ENCODE measurements at regions of chr1 and their contacts with region 1.

Region 1: DNA sequence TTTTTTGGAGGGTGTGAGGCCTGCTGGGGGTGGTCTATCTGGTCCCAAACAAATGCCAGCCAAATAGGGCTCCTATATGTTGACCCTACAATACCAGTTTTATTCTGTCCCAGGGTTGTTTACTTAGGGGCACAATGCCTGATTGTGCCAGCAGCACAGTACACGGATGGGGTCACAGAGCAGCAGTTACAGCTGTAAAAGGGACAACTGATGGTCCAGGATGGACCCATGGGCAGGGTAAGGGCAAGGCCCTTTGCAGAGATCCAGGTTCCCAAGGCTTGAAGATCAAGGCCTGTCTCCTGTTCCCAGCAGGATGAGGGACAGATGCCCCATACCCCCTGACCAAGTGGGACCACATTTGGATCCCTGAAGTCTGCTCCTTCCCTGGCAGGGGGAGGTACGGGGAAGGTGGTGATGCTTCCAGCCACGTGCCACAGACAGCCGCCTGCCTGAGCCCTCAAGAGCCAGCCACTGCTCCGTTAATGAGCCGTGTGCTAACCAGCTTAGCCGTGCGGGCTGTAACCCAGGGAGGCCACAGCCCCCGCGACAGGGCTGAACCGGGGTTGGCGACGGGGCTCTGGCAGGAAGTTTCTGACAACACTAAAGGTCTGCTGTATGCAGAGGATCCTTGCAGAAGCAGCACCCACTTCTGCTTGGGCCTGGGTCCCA is 18.2 kb downstream of the SLC6A9 start:
- DNase-seq: no peak
- ATAC-seq: no peak
- H3K4me3 ChIP-seq: no peak overlapping the region
- H3K27ac ChIP-seq: no peak overlapping the region
- H3K4me1 ChIP-seq: peaks cover 6 to 48% of the 10 kb centered on the region in 2 experiments; a peak in 4 of 5 replicates
- H3K27me3 ChIP-seq: no peaks in the 10 kb centered on the region
- CTCF ChIP-seq: no peak
- EP300 ChIP-seq: no peak
- POLR2A ChIP-seq: no peak
- RAD21 ChIP-seq: no peak

Region 2: GRCh38 chr1:43974443-43975248 is 38.4 kb before region 1 on chr1 and contains the start of gene ATP6V0B:
- CTCF ChIA-PET with region 1: no interaction called
- POLR2A ChIA-PET with region 1: no interaction called
- in situ Hi-C with region 1: no loop called
- intact Hi-C with region 1: no loop called
- DNase-seq: peak; percentile 91 to 99 (median 95)
- ATAC-seq: peak; percentile 87
- H3K4me3 ChIP-seq: peak within 1 kb of the TSS; percentile 87
- H3K27ac ChIP-seq: peak within 1 kb of the TSS; percentile 89
- H3K4me1 ChIP-seq: peaks cover 41 to 67% of the 10 kb centered on the region in 2 experiments
- H3K27me3 ChIP-seq: no peaks in the 10 kb centered on the region
- CTCF ChIP-seq: peak in 1 of 3 experiments; percentile 33; a peak in 2 of 6 replicates
- EP300 ChIP-seq: no peak; the same call in 1 of the 2 replicates
- POLR2A ChIP-seq: peak; percentile 81
- RAD21 ChIP-seq: 0 out of 4 replicates have a peak, but pooled peaks of 1 of the 2 experiments have one; percentile 13
- polyA plus RNA-seq, gene ATP6V0B: 137 to 276 TPM

Region 3: DNA sequence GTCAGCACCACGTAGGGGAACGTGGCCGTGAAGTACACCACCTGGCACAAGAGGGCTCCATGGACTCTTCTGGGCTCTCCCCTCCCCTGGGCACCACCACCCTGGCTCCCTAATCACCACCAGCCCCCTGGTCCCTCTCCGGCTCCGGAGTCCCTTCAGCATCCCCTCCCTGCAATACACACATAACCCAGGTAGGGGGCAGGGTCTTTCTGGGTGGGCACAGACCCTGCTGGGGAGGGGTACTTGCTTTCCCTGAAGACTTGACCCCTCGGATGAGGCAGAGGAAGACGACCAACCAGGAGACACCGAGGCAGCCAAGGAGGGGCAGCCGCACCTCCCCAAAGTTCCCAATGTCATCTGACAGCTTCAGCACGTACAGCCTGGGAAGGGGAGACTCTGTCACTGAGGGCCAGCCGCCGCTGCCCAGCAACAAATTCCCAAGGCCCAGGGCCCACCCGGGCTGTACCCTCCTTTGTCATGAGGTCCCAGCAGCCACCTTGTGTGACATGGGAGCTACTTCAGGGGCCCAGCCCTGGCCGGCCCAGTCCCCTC is 10.4 kb before region 1 on chr1:
- CTCF ChIA-PET with region 1: no interaction called
- POLR2A ChIA-PET with region 1: interaction called, 11 read pairs
- in situ Hi-C with region 1: no loop called
- intact Hi-C with region 1: no loop called
- DNase-seq: no peak
- ATAC-seq: no peak
- H3K4me3 ChIP-seq: no peak overlapping the region
- H3K27ac ChIP-seq: no peak overlapping the region
- H3K4me1 ChIP-seq: peaks cover 0 to 49% of the 10 kb centered on the region in 2 experiments; a peak in 3 of 5 replicates
- H3K27me3 ChIP-seq: no peaks in the 10 kb centered on the region
- CTCF ChIP-seq: peak; percentile 20 to 50 (median 48); a peak in 4 of 6 replicates
- EP300 ChIP-seq: no peak
- POLR2A ChIP-seq: no peak
- RAD21 ChIP-seq: no peak

Region 4: GRCh38 chr1:44029906-44030604 is 17.0 kb after region 1 on chr1:
- CTCF ChIA-PET with region 1: no interaction called
- POLR2A ChIA-PET with region 1: interaction called, 29 read pairs
- in situ Hi-C with region 1: no loop called
- intact Hi-C with region 1: no loop called
- DNase-seq: peak; percentile 95 to 96 (median 96)
- ATAC-seq: peak; percentile 85
- H3K4me3 ChIP-seq: peak overlapping the region; percentile 82
- H3K27ac ChIP-seq: peak overlapping the region; percentile 84
- H3K4me1 ChIP-seq: peaks cover 43 to 61% of the 10 kb centered on the region in 2 experiments
- H3K27me3 ChIP-seq: no peaks in the 10 kb centered on the region
- CTCF ChIP-seq: no peak
- EP300 ChIP-seq: peak; percentile 63
- POLR2A ChIP-seq: peak; percentile 61
- RAD21 ChIP-seq: no peak

Region 5: GRCh38 chr1:44044071-44044801 is 31.2 kb after region 1 on chr1:
- CTCF ChIA-PET with region 1: no interaction called
- POLR2A ChIA-PET with region 1: interaction called, 6 read pairs
- in situ Hi-C with region 1: loop called (anchors 5 kb)
- intact Hi-C with region 1: no loop called
- DNase-seq: peak; percentile 63 to 82 (median 73)
- ATAC-seq: peak; percentile 63
- H3K4me3 ChIP-seq: no peak overlapping the region
- H3K27ac ChIP-seq: no peak overlapping the region; the same call in 2 of the 3 replicates
- H3K4me1 ChIP-seq: peaks cover 22 to 48% of the 10 kb centered on the region in 2 experiments; a peak in 4 of 5 replicates
- H3K27me3 ChIP-seq: no peaks in the 10 kb centered on the region
- CTCF ChIP-seq: no peak
- EP300 ChIP-seq: peak; percentile 66; the same call in 1 of the 2 replicates
- POLR2A ChIP-seq: no peak
- RAD21 ChIP-seq: no peak